H1 (cell line): ENCODE measurements at regions of chr19 and their contacts with region 1.

Region 1: DNA sequence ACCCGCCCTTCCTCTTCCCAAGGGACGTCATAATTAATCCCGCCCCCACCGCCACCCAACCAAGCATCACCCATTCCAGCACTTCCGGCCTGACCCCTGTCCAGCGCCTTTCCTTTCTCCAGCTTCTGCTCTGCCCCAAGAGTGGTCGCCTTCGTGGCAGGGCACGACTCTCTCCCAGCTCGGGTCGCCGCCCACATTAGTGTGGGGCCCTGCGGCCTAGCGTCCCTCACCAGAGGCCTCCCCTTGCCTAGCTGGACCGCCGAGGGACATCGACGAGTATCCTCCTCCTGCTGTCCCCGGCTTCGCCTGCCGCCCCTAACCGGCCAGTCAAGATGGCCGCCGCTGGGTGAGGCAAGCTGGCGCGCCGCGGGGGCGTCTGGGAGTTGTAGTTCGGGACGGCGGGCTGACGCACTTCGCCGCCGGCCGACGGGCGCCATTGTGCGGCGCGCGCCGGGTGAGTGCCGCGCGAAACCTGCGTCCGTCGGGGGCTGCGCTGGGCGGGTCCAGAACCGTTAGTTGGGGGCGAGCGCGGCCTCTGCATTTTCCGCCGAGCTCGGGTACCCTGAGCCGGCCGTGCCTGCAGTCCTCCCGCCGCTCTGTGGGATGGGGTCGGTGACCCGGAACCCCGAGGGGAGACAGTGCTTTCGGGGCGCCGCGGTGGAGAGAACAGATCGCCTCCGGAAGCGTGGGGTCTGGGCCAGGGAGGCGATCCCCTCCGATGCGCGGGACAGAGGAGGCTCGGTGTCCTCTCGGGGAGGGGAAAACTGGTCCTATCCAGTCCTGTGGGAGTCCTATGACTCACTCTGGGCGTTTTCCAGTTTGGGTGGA is at the start of gene ZNF274:
- DNase-seq: peak; percentile 84 to 97
- H3K4me3 ChIP-seq: peak within 1 kb of the TSS; percentile 94 to 97 (median 96)
- H3K27ac ChIP-seq: peak within 1 kb of the TSS; percentile 99
- H3K4me1 ChIP-seq: no peaks in the 10 kb centered on the region; a peak in 1 of 7 replicates
- H3K27me3 ChIP-seq: no peaks in the 10 kb centered on the region
- CTCF ChIP-seq: no peak
- EP300 ChIP-seq: no peak
- POLR2A ChIP-seq: peak; percentile 87 to 96
- RAD21 ChIP-seq: no peak
- total RNA-seq, gene ZNF274: 25.1 and 27.7 TPM in 2 replicates

Region 2: DNA sequence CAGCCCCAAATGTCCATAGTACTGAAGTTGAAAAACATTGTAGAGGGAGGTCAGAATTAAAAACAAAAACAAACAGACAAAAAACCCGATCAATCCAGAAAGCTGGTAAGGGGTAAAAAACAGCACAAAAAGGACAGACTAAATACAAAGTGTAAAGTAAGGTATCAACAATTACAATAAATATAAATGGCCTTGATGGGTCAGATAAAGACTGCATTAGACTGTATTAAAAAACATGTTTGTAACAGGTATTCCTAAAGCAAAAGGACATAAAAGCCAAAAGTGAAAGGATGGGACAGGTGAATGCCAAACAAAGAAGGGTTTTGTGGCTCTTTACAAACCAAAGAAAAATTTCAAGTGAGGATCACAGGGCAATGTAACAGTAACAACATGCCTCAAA is 49.0 kb before region 1 on chr19:
- CTCF ChIA-PET with region 1: no interaction called
- POLR2A ChIA-PET with region 1: no interaction called
- DNase-seq: no peak
- H3K4me3 ChIP-seq: no peak overlapping the region
- H3K27ac ChIP-seq: no peak overlapping the region
- H3K4me1 ChIP-seq: no peaks in the 10 kb centered on the region
- H3K27me3 ChIP-seq: no peaks in the 10 kb centered on the region
- CTCF ChIP-seq: no peak
- EP300 ChIP-seq: no peak
- POLR2A ChIP-seq: no peak
- RAD21 ChIP-seq: no peak

Region 3: DNA sequence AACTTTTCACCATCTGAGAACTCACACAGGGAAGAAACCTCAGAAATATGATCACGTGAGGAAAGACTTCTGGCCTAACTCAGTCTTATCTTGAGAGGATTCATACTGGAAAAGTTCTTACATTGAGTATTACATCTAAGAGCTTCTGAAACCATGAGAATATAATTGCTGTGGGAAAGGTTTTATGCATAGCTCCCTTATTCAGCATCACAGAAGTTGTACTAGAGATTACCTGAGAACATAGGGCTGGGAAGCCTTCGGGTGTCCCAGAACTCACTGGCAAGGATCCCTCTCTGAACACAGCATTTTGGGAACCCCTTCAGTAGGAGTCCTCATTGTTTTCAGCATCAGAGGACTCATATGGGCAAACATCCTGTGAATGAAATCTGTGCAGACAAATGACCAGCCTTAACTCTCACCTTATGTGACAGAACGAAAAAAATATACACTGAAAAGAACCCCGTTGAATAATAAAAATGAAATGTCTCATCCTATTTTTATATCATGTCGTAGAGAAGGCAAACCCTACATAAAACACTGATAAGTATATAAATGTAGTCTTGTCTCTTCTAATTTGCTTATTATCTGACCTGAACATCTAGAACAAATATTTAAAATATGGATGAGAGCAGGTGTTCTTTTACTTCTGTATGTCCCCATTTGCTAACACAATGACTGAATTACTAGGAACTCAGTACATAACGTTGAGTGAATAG is 13.9 kb after region 1 on chr19:
- CTCF ChIA-PET with region 1: interaction called, 3 read pairs
- POLR2A ChIA-PET with region 1: interaction called, 11 read pairs
- DNase-seq: no peak
- H3K4me3 ChIP-seq: peak overlapping the region in 1 of 4 experiments; percentile 22; a peak in 1 of 8 replicates
- H3K27ac ChIP-seq: no peak overlapping the region
- H3K4me1 ChIP-seq: no peaks in the 10 kb centered on the region
- H3K27me3 ChIP-seq: no peaks in the 10 kb centered on the region; a peak in 1 of 7 replicates
- CTCF ChIP-seq: no peak
- EP300 ChIP-seq: no peak
- POLR2A ChIP-seq: no peak
- RAD21 ChIP-seq: no peak